Mammary epithelial cell (primary cell): ENCODE measurements at regions of chr3 and their contacts with region 1.

Region 1: GRCh38 chr3:159763602-159764489 is 224.8 kb upstream of the IL12A start:
- DNase-seq: peak; percentile 93
- H3K4me3 ChIP-seq: peak overlapping the region; percentile 59 to 82 (median 71)
- H3K27ac ChIP-seq: peak overlapping the region; percentile 93
- H3K4me1 ChIP-seq: peaks cover 51% of the 10 kb centered on the region
- H3K27me3 ChIP-seq: no peaks in the 10 kb centered on the region
- CTCF ChIP-seq: peak in 1 of 2 donors; percentile 24

Region 2: GRCh38 chr3:159260049-159260662 is 503.7 kb before region 1 on chr3:
- CTCF ChIA-PET with region 1: no interaction called
- dilution Hi-C with region 1: no loop called
- in situ Hi-C with region 1: no loop called
- intact Hi-C with region 1: loop called (anchors 2 kb)
- DNase-seq: peak; percentile 42
- H3K4me3 ChIP-seq: no peak overlapping the region
- H3K27ac ChIP-seq: no peak overlapping the region
- H3K4me1 ChIP-seq: no peaks in the 10 kb centered on the region
- H3K27me3 ChIP-seq: peaks cover 2% of the 10 kb centered on the region
- CTCF ChIP-seq: peak; percentile 65 to 70

Region 3: DNA sequence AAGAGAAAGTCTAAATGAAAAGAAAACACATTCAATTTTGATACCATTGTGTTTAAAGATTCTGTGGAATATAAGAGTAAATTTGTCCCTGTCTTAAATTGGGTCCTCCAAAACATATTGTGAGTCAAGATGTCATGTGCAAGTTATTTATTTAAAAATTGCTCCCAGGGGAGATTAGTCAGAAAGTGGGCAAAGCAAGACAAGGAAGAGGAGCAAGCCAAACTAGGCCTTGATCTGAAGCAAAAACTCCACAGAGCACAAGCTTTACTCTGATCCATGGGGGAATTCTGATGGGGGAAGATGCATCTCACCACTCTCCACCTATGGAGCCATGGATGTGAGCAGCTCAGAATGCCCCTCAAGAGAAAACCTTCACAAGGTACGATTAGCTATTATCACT is 118.0 kb before region 1 on chr3:
- CTCF ChIA-PET with region 1: no interaction called
- dilution Hi-C with region 1: no loop called
- in situ Hi-C with region 1: no loop called
- intact Hi-C with region 1: no loop called
- DNase-seq: no peak
- H3K4me3 ChIP-seq: no peak overlapping the region
- H3K27ac ChIP-seq: no peak overlapping the region
- H3K4me1 ChIP-seq: no peaks in the 10 kb centered on the region
- H3K27me3 ChIP-seq: no peaks in the 10 kb centered on the region
- CTCF ChIP-seq: no peak

Region 4: GRCh38 chr3:159660326-159660725 is 103.5 kb before region 1 on chr3:
- CTCF ChIA-PET with region 1: no interaction called
- dilution Hi-C with region 1: no loop called
- in situ Hi-C with region 1: no loop called
- intact Hi-C with region 1: no loop called
- DNase-seq: no peak
- H3K4me3 ChIP-seq: no peak overlapping the region
- H3K27ac ChIP-seq: no peak overlapping the region
- H3K4me1 ChIP-seq: no peaks in the 10 kb centered on the region
- H3K27me3 ChIP-seq: no peaks in the 10 kb centered on the region
- CTCF ChIP-seq: no peak

Region 5: GRCh38 chr3:159672728-159673688 is 90.8 kb before region 1 on chr3:
- CTCF ChIA-PET with region 1: no interaction called
- dilution Hi-C with region 1: no loop called
- in situ Hi-C with region 1: no loop called
- intact Hi-C with region 1: loop called (anchors 5 kb)
- DNase-seq: no peak
- H3K4me3 ChIP-seq: no peak overlapping the region
- H3K27ac ChIP-seq: no peak overlapping the region
- H3K4me1 ChIP-seq: peaks cover 15% of the 10 kb centered on the region
- H3K27me3 ChIP-seq: no peaks in the 10 kb centered on the region
- CTCF ChIP-seq: peak; percentile 1 to 17

Region 6: GRCh38 chr3:159787191-159787590 is 23.3 kb after region 1 on chr3:
- CTCF ChIA-PET with region 1: interaction called, 6 read pairs
- dilution Hi-C with region 1: no loop called
- in situ Hi-C with region 1: no loop called
- intact Hi-C with region 1: loop called (anchors 1 kb)
- DNase-seq: peak; percentile 94
- H3K4me3 ChIP-seq: no peak overlapping the region
- H3K27ac ChIP-seq: peak overlapping the region; percentile 88
- H3K4me1 ChIP-seq: peaks cover 76% of the 10 kb centered on the region
- H3K27me3 ChIP-seq: no peaks in the 10 kb centered on the region
- CTCF ChIP-seq: no peak

Region 7: GRCh38 chr3:159828542-159828943 is 64.7 kb after region 1 on chr3:
- CTCF ChIA-PET with region 1: no interaction called
- dilution Hi-C with region 1: no loop called
- in situ Hi-C with region 1: no loop called
- intact Hi-C with region 1: loop called (anchors 1 kb)
- DNase-seq: peak; percentile 47
- H3K4me3 ChIP-seq: no peak overlapping the region
- H3K27ac ChIP-seq: peak overlapping the region; percentile 27
- H3K4me1 ChIP-seq: peaks cover 55% of the 10 kb centered on the region
- H3K27me3 ChIP-seq: no peaks in the 10 kb centered on the region
- CTCF ChIP-seq: peak; percentile 46 to 51

Region 8: GRCh38 chr3:160003520-160004128 is 239.8 kb after region 1 on chr3:
- CTCF ChIA-PET with region 1: no interaction called
- dilution Hi-C with region 1: no loop called
- in situ Hi-C with region 1: no loop called
- intact Hi-C with region 1: loop called (anchors 5 kb)
- DNase-seq: peak; percentile 41
- H3K4me3 ChIP-seq: no peak overlapping the region
- H3K27ac ChIP-seq: no peak overlapping the region
- H3K4me1 ChIP-seq: no peaks in the 10 kb centered on the region
- H3K27me3 ChIP-seq: no peaks in the 10 kb centered on the region
- CTCF ChIP-seq: peak; percentile 44 to 69